Panc1 (cell line): ENCODE measurements at regions of chr16 and their contacts with region 1.

Region 1: GRCh38 chr16:31678649-31679325 is 151.1 kb downstream of the AHSP start:
- DNase-seq: no peak
- ATAC-seq: no peak
- H3K4me3 ChIP-seq: no peak overlapping the region
- H3K27ac ChIP-seq: no peak overlapping the region
- H3K4me1 ChIP-seq: no peaks in the 10 kb centered on the region
- H3K27me3 ChIP-seq: no peaks in the 10 kb centered on the region
- CTCF ChIP-seq: no peak

Region 2: DNA sequence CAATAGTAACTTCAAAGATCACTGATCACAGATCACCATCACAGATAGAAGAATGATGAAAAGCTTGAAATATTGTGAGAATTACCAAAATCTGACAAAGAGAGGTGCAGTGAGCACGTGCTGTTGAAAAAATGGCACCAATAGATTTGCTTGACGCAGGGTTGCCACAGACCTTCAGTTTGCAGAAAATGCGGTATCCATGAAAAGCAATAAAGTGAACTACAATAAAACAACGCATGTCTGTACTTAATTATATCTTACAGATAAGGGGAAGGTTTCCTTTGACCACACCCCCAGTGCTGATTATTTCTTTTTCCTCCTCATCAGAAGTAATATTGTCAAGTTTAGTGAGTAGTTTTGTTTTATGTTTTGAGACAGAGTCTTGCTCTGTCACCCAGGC is 440.7 kb before region 1 on chr16:
- CTCF ChIA-PET with region 1: no interaction called
- POLR2A ChIA-PET with region 1: interaction called, 12 read pairs
- in situ Hi-C with region 1: no loop called
- intact Hi-C with region 1: no loop called
- DNase-seq: no peak
- ATAC-seq: no peak
- H3K4me3 ChIP-seq: no peak overlapping the region
- H3K27ac ChIP-seq: no peak overlapping the region
- H3K4me1 ChIP-seq: no peaks in the 10 kb centered on the region
- H3K27me3 ChIP-seq: no peaks in the 10 kb centered on the region
- CTCF ChIP-seq: no peak

Region 3: DNA sequence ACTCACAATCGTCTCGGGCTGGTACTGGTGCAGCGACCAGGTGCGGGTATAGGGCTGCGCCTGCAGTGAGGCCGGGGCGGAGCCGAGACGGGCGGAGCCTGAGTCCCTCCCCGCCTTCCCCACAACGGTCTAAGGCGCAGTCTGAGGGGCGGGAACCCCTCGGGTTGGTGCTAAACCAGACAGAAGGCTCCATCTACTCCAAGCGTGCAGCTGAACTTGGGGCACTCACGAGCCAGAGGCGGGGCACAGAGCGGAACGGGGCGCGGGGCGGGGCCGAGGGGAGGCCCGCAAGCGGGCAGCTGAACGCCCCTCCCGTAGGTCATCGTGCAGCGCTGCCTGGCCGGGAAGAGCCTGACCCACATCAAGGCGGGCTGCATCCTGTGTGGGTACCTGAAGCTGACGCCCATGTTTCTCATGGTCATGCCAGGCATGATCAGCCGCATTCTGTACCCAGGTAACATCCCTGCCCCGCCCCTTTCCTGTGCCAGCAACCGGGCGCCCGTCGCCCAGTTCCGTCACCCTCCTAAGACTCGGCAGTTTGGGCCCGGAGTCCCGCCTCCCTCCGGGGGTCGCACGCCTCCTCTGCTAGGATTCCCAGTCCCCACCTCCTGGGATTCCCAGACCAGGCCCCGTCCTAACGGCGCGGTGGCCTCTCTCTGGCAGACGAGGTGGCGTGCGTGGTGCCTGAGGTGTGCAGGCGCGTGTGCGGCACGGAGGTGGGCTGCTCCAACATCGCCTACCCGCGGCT is 190.9 kb before region 1 on chr16:
- CTCF ChIA-PET with region 1: no interaction called
- POLR2A ChIA-PET with region 1: no interaction called
- in situ Hi-C with region 1: no loop called
- intact Hi-C with region 1: loop called (anchors 10 kb)
- DNase-seq: no peak
- ATAC-seq: peak; percentile 91
- H3K4me3 ChIP-seq: peak overlapping the region; percentile 57 to 72
- H3K27ac ChIP-seq: peak overlapping the region; percentile 54; the same call in 1 of the 2 replicates
- H3K4me1 ChIP-seq: no peaks in the 10 kb centered on the region
- H3K27me3 ChIP-seq: no peaks in the 10 kb centered on the region
- CTCF ChIP-seq: no peak